Caco-2 (cell line): ENCODE measurements at regions of chr3 and their contacts with region 1.

Region 1: DNA sequence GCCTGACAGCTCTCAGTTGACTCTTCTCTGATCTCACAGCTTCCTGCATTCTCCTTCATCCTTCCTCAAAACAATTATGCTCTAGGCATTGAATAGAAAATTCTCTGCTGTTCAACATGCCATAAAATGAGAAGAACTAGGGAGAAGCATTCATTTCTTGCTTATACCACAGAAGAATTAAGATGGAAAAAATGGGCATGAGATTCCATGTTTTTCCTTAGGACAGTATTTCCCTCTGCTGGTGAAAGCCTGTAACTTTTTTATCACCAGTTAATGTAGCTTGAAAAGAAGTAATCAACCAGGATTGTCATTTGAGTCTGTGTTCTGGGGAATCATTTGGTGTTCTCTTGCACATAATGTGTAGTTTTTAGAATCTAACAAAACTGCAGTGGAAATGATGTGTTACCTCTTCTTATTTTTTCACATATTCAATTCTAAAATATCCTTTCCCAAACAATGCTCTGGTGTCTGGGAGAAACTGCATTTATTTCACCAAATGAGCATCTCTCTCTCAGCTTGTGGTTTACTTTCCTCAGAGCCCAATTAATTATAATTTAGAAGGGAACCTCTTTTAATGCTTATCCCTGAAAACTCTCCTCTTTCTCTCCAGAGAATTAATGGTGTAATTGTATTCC is 92.8 kb upstream of the DCBLD2 start:
- DNase-seq: peak in 1 of 2 experiments; percentile 17
- H3K4me3 ChIP-seq: no peak overlapping the region
- H3K4me3 Mint-ChIP-seq: no peak overlapping the region
- H3K27ac Mint-ChIP-seq: no peak overlapping the region
- H3K4me1 ChIP-seq: no peaks in the 10 kb centered on the region
- H3K4me1 Mint-ChIP-seq: no peaks in the 10 kb centered on the region
- H3K27me3 ChIP-seq: no peaks in the 10 kb centered on the region
- H3K27me3 Mint-ChIP-seq: peaks cover 7% of the 10 kb centered on the region
- CTCF ChIP-seq: peak; percentile 51 to 60

Region 2: GRCh38 chr3:98602078-98602678 is 392.1 kb before region 1 on chr3:
- CTCF ChIA-PET with region 1: no interaction called
- POLR2A ChIA-PET with region 1: no interaction called
- intact Hi-C with region 1: loop called (anchors 2 kb)
- DNase-seq: peak; percentile 52 to 53
- H3K4me3 ChIP-seq: no peak overlapping the region
- H3K4me3 Mint-ChIP-seq: no peak overlapping the region
- H3K27ac Mint-ChIP-seq: no peak overlapping the region
- H3K4me1 ChIP-seq: no peaks in the 10 kb centered on the region
- H3K4me1 Mint-ChIP-seq: no peaks in the 10 kb centered on the region
- H3K27me3 ChIP-seq: no peaks in the 10 kb centered on the region
- H3K27me3 Mint-ChIP-seq: no peaks in the 10 kb centered on the region
- CTCF ChIP-seq: peak; percentile 73 to 74

Region 3: GRCh38 chr3:98726084-98726483 is 268.2 kb before region 1 on chr3:
- CTCF ChIA-PET with region 1: no interaction called
- POLR2A ChIA-PET with region 1: no interaction called
- intact Hi-C with region 1: loop called (anchors 10 kb)
- DNase-seq: no peak
- H3K4me3 ChIP-seq: no peak overlapping the region
- H3K4me3 Mint-ChIP-seq: no peak overlapping the region
- H3K27ac Mint-ChIP-seq: no peak overlapping the region
- H3K4me1 ChIP-seq: peaks cover 12% of the 10 kb centered on the region
- H3K4me1 Mint-ChIP-seq: no peaks in the 10 kb centered on the region
- H3K27me3 ChIP-seq: no peaks in the 10 kb centered on the region
- H3K27me3 Mint-ChIP-seq: no peaks in the 10 kb centered on the region
- CTCF ChIP-seq: no peak

Region 4: DNA sequence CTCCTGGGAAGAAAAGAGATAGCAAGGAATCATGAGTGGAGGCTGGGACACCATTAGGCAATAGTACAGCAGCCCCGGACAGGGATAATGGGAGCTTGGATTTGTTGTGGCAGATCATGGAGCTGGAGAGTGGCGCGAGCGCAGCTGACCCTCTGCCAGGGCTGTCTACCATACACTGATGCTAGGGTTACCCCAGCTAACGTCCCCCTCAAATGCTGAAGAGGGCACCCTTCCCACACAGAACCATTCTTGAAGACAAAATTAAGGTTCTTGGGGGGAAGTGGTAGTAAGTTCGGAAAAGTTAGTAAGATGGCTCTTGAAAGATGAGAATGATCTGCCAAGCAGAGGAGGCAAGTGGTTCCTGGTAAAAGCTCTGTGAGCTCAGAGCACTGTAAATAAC is 170.0 kb before region 1 on chr3:
- CTCF ChIA-PET with region 1: interaction called, 18 read pairs
- POLR2A ChIA-PET with region 1: no interaction called
- intact Hi-C with region 1: no loop called
- DNase-seq: no peak
- H3K4me3 ChIP-seq: no peak overlapping the region
- H3K4me3 Mint-ChIP-seq: no peak overlapping the region
- H3K27ac Mint-ChIP-seq: no peak overlapping the region
- H3K4me1 ChIP-seq: peaks cover 17% of the 10 kb centered on the region
- H3K4me1 Mint-ChIP-seq: peaks cover 11% of the 10 kb centered on the region
- H3K27me3 ChIP-seq: no peaks in the 10 kb centered on the region
- H3K27me3 Mint-ChIP-seq: no peaks in the 10 kb centered on the region
- CTCF ChIP-seq: peak in 1 of 2 experiments; percentile 19

Region 5: GRCh38 chr3:98901392-98902350 is 92.6 kb before region 1 on chr3 and contains the start of gene DCBLD2:
- CTCF ChIA-PET with region 1: interaction called, 14 read pairs
- POLR2A ChIA-PET with region 1: no interaction called
- intact Hi-C with region 1: loop called (anchors 1 kb)
- DNase-seq: peak; percentile 98 to 99
- H3K4me3 ChIP-seq: peak within 1 kb of the TSS; percentile 91
- H3K4me3 Mint-ChIP-seq: peak within 1 kb of the TSS; percentile 96
- H3K27ac Mint-ChIP-seq: peak within 1 kb of the TSS; percentile 81
- H3K4me1 ChIP-seq: peaks cover 17% of the 10 kb centered on the region
- H3K4me1 Mint-ChIP-seq: peaks cover 14% of the 10 kb centered on the region
- H3K27me3 ChIP-seq: no peaks in the 10 kb centered on the region
- H3K27me3 Mint-ChIP-seq: no peaks in the 10 kb centered on the region
- CTCF ChIP-seq: no peak
- total RNA-seq, gene DCBLD2: 53.0 and 58.5 TPM in 2 replicates

Region 6: GRCh38 chr3:99355465-99355864 is 361.2 kb after region 1 on chr3:
- CTCF ChIA-PET with region 1: no interaction called
- POLR2A ChIA-PET with region 1: no interaction called
- intact Hi-C with region 1: no loop called
- DNase-seq: no peak
- H3K4me3 ChIP-seq: no peak overlapping the region
- H3K4me3 Mint-ChIP-seq: no peak overlapping the region
- H3K27ac Mint-ChIP-seq: no peak overlapping the region
- H3K4me1 ChIP-seq: no peaks in the 10 kb centered on the region
- H3K4me1 Mint-ChIP-seq: no peaks in the 10 kb centered on the region
- H3K27me3 ChIP-seq: no peaks in the 10 kb centered on the region; the same call in 1 of the 2 replicates
- H3K27me3 Mint-ChIP-seq: peaks cover 9% of the 10 kb centered on the region
- CTCF ChIP-seq: no peak